Esophagus muscularis mucosa (tissue), 4 donors: ENCODE measurements at regions of chr11 and their contacts with region 1.

Region 1: DNA sequence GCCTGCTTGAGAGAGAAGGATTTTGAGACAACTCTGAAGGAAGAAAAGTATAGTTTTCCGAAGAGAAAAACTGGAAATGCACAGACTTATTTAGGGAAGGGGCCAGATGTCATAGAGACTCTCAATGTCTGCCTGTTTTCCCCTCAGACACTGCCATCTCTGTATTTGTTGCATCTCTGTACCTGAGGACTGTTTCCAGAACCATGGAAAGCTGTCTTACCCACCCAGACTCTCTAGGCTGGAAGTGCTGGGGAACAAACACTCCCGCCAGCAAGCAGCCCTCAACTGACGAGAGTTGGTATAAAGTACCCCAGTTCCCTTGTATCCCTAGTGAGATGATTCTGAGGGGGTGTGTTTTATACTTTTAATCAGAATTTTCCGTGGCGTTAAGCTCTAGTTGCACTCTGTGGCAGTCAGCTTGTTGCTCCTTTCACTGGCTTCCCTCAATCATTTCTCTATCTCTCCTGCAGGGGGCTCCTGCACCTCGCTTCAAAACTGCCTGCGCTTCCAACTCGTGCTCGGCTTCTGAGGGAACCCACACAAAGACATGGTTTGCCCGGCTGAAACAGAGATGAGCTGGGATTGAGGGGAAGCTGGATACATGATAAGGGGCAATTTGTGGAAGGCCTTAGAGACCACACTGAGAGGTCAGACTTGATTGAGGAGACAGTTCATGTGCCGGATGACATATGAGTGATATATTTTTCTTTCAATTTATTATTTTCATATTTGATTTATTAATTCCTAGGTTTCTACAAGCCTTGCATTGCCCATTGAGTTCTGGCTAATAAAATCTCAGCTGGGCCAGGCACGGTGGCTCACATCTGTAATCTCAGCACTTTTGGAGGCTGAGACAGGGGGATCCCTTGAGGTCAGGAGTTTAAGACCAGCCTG is 36.9 kb upstream of the CLPB start:
- DNase-seq: no peak
- H3K4me3 ChIP-seq: no peak overlapping the region
- H3K27ac ChIP-seq: no peak overlapping the region
- H3K4me1 ChIP-seq: peaks cover 0 to 7% (median 3%) of the 10 kb centered on the region in 4 donors
- H3K27me3 ChIP-seq: peaks cover 0 to 58% (median 0%) of the 10 kb centered on the region in 4 donors
- CTCF ChIP-seq: peak; percentile 75 to 83 (median 79)
- EP300 ChIP-seq: no peak
- POLR2A ChIP-seq: no peak

Region 2: DNA sequence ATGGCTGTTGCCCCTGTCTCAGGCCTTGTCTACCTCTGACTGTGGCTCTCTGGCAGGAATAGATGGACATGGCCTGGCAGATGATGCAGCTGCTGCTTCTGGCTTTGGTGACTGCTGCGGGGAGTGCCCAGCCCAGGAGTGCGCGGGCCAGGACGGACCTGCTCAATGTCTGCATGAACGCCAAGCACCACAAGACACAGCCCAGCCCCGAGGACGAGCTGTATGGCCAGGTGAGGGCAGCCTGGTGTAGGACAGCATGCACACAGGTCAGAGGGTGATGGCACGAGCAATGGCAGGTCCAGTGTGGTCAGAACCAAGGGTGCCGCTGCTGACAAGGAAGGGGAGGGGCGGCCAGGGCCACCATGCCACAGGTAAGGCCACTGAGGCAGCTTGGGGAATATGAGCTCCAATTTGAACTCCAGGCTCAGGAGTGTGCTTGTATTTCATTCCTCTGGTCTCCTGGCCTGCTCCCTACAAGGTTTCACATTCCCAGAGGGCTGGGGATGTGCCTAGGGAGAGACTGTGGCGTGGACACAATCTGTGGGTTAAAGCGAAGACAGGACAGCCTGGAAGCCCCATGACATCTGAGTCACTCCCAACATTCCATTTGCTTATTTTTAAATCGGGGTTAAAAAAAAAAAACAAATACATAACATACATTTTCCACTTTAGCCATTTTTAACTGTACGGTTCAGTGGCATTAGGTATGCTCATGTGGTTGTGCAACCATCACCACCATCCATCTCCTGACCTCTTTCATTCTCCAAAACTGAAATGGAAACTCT is 335.2 kb before region 1 on chr11:
- intact Hi-C with region 1: no loop called
- DNase-seq: no peak
- H3K4me3 ChIP-seq: no peak overlapping the region
- H3K27ac ChIP-seq: no peak overlapping the region
- H3K4me1 ChIP-seq: no peaks in the 10 kb centered on the region
- H3K27me3 ChIP-seq: peaks cover 0 to 4% (median 0%) of the 10 kb centered on the region in 4 donors
- CTCF ChIP-seq: no peak
- EP300 ChIP-seq: no peak
- POLR2A ChIP-seq: no peak

Region 3: DNA sequence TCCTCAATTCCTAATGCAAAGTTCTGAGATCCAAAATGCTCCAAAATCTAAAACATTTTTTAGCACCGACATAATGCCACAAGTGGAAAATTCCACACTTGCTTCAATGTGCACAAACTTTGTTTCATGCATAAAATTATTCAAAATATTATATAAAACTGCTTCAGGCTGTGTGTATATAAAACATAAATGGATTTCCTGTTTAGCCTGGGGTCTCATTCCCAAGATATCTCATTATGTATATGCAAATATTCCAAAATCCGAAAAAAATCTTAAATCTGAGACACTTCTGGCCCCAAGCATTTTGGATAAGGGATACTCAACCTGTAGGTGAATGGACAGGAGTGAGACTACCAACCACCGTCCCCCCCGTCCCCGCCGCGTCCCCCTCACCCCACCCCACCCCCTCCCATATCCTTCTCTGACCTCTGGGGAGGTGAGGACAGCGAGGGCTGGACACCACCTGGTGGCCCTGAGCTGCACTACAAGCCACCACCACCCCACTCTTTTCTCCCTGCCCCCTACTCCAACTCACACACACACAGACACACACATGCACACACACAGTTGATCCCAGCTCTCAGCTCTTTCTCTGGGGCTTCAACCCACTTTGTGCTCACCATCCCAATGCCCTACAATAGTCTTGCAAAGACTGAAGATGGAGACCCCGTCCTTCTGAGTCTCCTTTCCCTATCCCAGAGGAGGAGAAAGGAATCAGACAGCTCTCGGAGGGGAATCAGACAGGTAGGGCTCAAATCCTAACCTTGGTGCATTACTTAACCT is 102.0 kb after region 1 on chr11:
- intact Hi-C with region 1: loop called (anchors 5 kb)
- DNase-seq: no peak
- H3K4me3 ChIP-seq: no peak overlapping the region
- H3K27ac ChIP-seq: no peak overlapping the region
- H3K4me1 ChIP-seq: no peaks in the 10 kb centered on the region
- H3K27me3 ChIP-seq: peaks cover 0 to 15% (median 0%) of the 10 kb centered on the region in 4 donors
- CTCF ChIP-seq: peak; percentile 46 to 58 (median 47)
- EP300 ChIP-seq: no peak
- POLR2A ChIP-seq: no peak

Region 4: GRCh38 chr11:72683782-72684200 is 212.5 kb after region 1 on chr11:
- intact Hi-C with region 1: loop called (anchors 5 kb)
- DNase-seq: peak; percentile 95
- H3K4me3 ChIP-seq: no peak overlapping the region
- H3K27ac ChIP-seq: peak overlapping the region in 3 of 4 donors; percentile 11 to 78 (median 41)
- H3K4me1 ChIP-seq: peaks cover 26 to 58% (median 44%) of the 10 kb centered on the region in 4 donors
- H3K27me3 ChIP-seq: peaks cover 0 to 18% (median 0%) of the 10 kb centered on the region in 4 donors
- CTCF ChIP-seq: peak; percentile 89 to 98 (median 91)
- EP300 ChIP-seq: no peak
- POLR2A ChIP-seq: no peak

Region 5: DNA sequence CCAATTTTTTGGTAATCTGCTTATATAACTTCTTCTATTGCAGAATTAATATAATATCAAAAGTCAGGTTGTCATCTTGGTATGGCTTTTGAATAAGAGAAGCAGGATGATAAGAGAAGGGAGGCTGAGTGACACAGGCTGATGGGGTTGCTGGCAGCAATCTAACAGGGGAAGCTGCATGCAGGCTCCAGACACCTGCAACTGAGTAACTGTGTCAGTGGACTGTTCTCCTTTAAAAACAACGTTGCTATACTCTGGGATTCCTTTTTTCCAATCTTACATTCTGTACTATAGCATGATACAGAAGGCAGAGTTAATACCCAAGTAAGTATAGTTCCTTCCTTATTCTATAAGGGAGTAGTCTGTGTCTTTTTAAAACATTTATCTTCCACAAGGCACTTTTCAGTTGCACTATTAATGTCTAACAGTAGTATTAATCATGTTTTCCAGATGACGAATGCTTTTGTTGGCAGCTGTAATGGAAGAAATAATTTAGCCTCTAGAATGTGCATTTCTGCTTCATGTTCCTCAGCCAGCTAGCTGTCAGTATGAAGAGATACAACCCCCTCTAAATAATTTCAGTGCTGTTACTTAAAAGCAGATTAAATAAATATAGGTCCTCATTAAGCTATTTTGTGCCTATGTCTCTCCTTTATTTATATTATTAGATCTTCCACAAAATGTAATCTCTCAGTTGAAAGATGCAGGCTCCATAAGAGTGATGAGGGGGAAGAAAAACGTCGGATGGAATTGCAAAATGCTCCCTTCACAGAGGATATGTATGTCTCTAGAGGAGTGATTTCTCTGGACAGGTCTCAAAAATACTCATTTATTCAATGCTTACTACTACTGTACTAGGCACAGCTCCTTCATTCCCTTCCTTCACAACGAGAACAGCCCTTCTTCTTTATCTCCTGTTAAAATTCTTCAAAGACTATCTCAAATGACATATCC is 393.7 kb after region 1 on chr11:
- intact Hi-C with region 1: no loop called
- DNase-seq: no peak
- H3K4me3 ChIP-seq: no peak overlapping the region
- H3K27ac ChIP-seq: peak overlapping the region; percentile 3 to 47 (median 24)
- H3K4me1 ChIP-seq: peaks cover 21 to 26% (median 22%) of the 10 kb centered on the region in 4 donors
- H3K27me3 ChIP-seq: no peaks in the 10 kb centered on the region
- CTCF ChIP-seq: no peak
- EP300 ChIP-seq: no peak
- POLR2A ChIP-seq: no peak